ENCODE measurements at regions of chr6 and their contacts with region 1.

Region 1: DNA sequence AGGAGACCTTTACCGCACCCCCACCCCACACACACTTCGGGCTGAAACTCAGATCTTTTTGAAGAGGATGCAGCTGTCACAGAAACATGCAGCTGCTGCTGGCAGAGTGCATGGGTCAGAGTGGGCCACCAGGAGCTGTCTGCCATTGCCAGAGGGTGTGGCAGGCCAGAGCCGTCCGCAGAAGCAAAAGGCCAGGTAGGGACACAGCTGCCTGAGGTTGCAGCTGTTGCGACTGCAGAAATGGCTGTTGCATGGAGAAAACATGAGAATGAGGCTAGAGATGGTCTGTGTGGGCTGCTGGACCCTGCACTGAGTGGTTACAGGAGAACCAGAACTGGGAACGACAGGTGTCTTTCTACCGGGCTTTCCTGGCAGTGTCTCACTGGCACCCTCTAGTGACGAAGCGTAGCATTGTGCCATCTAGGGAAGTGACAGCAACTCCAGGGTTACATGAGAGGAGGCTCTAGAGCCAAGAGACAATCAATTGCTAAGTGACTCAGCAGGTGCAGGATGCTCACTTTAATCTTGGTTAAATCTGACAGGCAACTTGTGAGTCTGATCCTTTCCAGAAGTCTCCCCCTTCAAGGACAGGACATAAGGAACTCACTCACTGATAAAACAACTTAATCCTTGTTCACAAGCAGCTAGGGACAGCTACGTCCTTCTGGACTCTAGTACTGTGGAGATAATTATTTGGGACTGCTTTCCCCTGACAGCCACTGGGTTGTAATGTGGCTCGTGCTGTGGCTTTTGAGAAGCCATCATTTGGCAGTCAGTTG is 29.1 kb upstream of the SERPINB9 start:
- DNase-seq: peak; percentile 81
- H3K4me3 Mint-ChIP-seq: no peak overlapping the region
- H3K27ac Mint-ChIP-seq: peak overlapping the region; percentile 64
- H3K4me1 Mint-ChIP-seq: peaks cover 25% of the 10 kb centered on the region
- H3K27me3 Mint-ChIP-seq: peaks cover 6% of the 10 kb centered on the region

Region 2: DNA sequence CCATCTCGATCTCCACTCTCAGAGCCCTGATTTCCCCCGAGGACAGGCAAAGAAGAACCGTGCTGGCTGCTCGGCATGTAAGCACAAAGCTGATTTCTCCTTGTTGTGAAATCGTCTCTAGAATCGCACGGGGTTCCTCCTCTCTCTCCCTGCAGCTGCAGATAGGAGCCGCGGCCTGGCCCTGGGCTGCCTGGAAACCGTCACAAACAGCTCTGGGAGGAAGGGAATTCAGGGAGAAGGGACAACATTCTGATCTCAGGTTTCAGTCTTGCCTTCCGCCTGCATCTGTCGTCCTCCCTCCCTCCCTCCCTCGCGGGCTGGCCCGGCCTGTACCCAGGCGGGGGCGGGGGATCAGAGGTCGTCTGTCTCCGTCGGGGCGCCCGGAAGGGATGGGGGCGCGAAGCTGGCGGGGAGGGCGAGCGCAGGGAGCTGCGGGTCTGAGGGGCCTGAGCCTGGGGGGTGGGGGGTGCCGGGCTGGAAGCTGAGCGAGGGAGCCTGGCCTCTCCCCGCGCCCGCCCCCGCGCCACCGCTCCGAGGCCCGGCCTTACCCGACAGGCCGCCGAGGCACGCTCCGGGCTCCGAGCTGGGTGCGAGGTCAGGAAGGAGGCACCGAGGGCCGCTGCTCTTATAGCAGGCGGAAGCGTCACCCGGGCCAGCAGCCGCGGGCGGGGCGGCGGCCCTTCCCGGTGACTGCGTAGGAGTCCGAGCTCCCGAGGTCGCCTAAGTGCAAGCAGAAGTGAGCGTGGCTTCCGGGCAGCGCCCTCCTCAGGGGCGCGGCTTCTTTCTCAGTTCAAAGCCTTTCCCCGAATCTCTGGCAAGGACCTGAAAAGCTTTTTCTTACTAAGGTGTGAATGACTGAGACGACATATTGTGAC is 90.7 kb before region 1 on chr6 and contains the start of gene SERPINB1:
- intact Hi-C with region 1: loop called (anchors 1 kb)
- DNase-seq: peak; percentile 80
- H3K4me3 Mint-ChIP-seq: peak within 1 kb of the TSS; percentile 96
- H3K27ac Mint-ChIP-seq: peak within 1 kb of the TSS; percentile 93
- H3K4me1 Mint-ChIP-seq: peaks cover 62% of the 10 kb centered on the region
- H3K27me3 Mint-ChIP-seq: no peaks in the 10 kb centered on the region
- total RNA-seq, gene SERPINB1: 79.5 and 80.1 TPM in 2 replicates

Region 3: GRCh38 chr6:2846873-2847224 is 85.3 kb before region 1 on chr6:
- intact Hi-C with region 1: loop called (anchors 1 kb)
- DNase-seq: no peak
- H3K4me3 Mint-ChIP-seq: peak overlapping the region; percentile 31
- H3K27ac Mint-ChIP-seq: peak overlapping the region; percentile 41
- H3K4me1 Mint-ChIP-seq: peaks cover 60% of the 10 kb centered on the region
- H3K27me3 Mint-ChIP-seq: no peaks in the 10 kb centered on the region

Region 4: GRCh38 chr6:2947445-2947844 is 15.3 kb after region 1 on chr6:
- intact Hi-C with region 1: no loop called
- DNase-seq: no peak
- H3K4me3 Mint-ChIP-seq: no peak overlapping the region
- H3K27ac Mint-ChIP-seq: no peak overlapping the region
- H3K4me1 Mint-ChIP-seq: peaks cover 30% of the 10 kb centered on the region
- H3K27me3 Mint-ChIP-seq: peaks cover 26% of the 10 kb centered on the region

Region 5: DNA sequence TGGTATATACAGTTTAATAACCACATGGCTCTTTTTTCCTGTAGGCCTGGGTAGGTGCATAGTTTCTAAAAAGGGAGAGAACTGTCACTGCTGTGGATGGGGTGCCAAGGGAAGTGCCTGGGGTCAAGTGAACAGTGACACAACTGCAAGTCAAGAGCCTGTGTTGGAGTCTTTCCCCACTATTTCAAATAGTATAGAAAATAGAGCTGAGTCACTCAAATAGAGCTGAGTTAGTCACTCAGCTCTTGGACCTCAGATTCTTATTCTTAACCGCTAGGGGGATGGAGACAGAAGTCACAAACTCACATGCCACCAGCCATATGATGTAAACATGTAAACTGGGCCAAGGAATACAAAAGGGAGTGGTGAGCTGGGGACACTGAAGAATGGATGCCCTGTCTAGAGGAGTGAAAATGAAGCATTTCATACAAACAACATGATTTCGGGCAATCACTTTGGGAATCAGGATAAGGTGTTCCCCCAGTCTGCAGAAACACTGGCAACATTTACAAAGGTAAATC is 69.7 kb after region 1 on chr6:
- intact Hi-C with region 1: no loop called
- DNase-seq: no peak
- H3K4me3 Mint-ChIP-seq: peak overlapping the region; percentile 72
- H3K27ac Mint-ChIP-seq: no peak overlapping the region
- H3K4me1 Mint-ChIP-seq: peaks cover 38% of the 10 kb centered on the region
- H3K27me3 Mint-ChIP-seq: no peaks in the 10 kb centered on the region

Measured in activated T-helper 1 cell treated with anti-CD3 and anti-CD28 coated beads, Interleukin-12 subunit alpha, Interleukin-12 subunit beta, Interleukin-2, Interleukin-4 antibody, amounts not matched to agents 30 ng/mL and 10 ng/mL and 1 ng/mL, durations not matched to agents 14 hours and 24 hours and 36 hours (primary cell).